Posterior cingulate gyrus (tissue), 11 donors: ENCODE measurements at regions of chr1 and their contacts with region 1.

Region 1: GRCh38 chr1:230642263-230642959 is at the start of gene COG2:
- DNase-seq: peak; percentile 90 to 99 (median 95)

Region 2: DNA sequence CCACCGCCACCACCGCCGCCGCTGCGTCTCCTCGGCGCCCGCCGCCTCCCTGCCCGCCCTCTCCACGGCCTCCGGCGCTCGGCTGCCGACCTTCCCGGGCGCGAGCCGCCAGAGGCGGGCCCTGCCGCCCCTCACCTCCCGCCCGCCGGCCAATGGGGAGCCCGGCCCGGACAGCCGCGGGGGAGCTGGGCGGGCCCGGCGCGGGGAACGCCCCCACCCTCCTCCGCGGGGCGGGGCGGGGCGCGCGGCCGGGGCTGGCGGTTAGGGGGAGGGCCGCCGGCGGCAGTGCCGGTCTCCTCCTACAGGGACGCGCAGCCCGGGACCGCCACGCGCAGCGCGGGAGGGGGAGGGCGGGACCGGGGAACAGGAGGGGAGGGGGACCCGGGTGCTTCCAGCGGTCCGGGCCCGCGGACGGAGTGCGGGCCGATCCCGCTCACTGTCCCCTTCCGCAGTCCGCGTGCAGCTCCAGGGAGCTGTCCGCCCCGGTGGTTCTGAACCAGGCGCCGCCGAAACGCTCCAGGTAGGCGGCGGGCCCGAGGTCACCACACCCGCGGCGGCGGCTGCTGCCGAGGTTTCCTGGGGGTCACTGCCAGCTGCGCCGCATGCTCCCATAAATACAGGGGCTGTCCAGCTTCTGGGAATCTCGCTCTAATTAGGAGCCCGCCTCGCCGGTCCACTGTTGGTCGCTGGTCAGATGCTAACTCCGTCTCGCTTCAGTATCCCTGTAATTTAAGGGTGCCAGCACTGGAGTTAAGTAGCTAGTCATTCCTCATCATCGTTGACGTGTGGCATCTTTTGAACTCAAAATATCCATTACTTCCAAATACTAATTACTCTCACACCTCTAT is 215.9 kb before region 1 on chr1 and contains the start of gene PGBD5:
- intact Hi-C with region 1: loop called (anchors 2 kb)
- DNase-seq: peak; percentile 71 to 98 (median 85)

Region 3: DNA sequence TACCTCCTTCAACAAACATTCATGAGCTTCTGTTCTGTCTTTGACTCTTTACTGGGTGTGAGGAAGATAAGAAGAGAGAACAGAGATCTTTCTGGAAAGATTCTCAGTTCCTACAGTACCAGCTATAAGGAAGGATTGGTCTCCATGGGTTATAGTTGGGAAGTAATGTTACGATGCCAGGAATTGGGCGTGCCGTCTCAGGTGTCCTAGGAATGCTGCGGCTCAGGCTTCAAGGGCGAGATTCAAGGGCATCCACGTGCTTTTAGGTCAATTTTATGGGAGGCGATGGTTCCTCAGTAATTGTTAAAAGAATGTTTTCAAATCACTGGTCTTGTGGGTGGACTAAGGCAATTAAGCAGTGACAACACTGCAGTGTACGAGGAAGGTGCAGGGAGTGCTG is 27.1 kb after region 1 on chr1:
- intact Hi-C with region 1: no loop called
- DNase-seq: no peak

Region 4: DNA sequence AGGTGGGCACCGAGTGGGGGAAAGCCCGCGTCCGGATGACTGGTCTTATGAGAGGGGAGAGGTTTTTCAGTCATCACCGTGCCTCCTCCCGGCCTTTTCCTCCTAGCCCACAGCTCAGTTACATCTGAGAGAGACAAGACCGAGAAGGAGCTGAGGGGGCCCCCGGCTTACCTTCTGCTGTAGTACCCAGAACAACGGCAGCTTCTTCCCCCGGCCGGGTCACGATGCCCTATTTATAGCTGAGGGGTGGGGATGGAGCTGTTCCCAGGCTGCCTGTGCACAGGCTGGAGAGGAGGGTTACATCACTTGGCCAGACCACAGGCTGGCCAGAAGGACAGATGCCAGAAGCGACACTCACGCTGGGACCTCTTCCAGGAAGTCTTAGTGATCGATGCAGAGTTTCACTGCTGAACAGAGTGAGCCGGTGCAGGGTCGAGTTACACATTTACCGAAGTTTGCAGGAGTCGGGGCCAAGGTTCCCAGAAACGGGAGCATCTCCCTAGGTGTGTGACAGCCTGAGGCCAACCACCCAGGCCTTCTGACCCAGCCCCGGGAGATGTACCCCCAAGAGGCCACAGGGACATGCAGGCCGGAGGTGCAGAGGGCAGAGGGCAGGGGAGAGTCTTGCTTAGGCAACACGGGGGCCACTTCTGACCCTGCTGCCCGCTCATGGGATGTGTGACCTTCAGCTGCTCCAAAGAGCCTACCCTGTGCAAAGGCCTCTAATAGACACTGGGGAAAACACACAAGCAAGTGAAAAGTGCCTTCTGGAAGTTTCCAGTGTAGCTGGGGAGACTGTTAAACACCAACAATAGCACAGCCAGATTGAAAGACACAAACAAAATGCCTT is 71.7 kb after region 1 on chr1 and contains the start of gene AGT:
- intact Hi-C with region 1: loop called (anchors 5 kb)
- DNase-seq: peak; percentile 63 to 96 (median 77)

Region 5: GRCh38 chr1:230753586-230754251 is 111.3 kb after region 1 on chr1:
- intact Hi-C with region 1: loop called (anchors 5 kb)
- DNase-seq: peak in 4 of 10 donors; percentile 58 to 93 (median 76)

Region 6: GRCh38 chr1:230772457-230773395 is 130.3 kb after region 1 on chr1:
- intact Hi-C with region 1: loop called (anchors 1 kb)
- DNase-seq: peak; percentile 57 to 96 (median 76)